ENCODE measurements at regions of chr6 and their contacts with region 1.

Region 1: GRCh38 chr6:11028964-11029363 is 15.1 kb downstream of the ELOVL2 start:
- DNase-seq: no peak
- H3K4me3 ChIP-seq: no peak overlapping the region
- H3K27ac ChIP-seq: no peak overlapping the region
- H3K4me1 ChIP-seq: peaks cover 11% of the 10 kb centered on the region
- CTCF ChIP-seq: no peak

Region 2: GRCh38 chr6:11043961-11044711 is 15.2 kb after region 1 on chr6 and contains the start of gene ELOVL2:
- CTCF ChIA-PET with region 1: no interaction called
- POLR2A ChIA-PET with region 1: interaction called, 4 read pairs
- intact Hi-C with region 1: loop called (anchors 2 kb)
- DNase-seq: no peak
- H3K4me3 ChIP-seq: no peak within 1 kb of the TSS
- H3K27ac ChIP-seq: no peak within 1 kb of the TSS
- H3K4me1 ChIP-seq: no peaks in the 10 kb centered on the region
- CTCF ChIP-seq: no peak
- total RNA-seq, gene ELOVL2: not detected in 2 replicates

Region 3: DNA sequence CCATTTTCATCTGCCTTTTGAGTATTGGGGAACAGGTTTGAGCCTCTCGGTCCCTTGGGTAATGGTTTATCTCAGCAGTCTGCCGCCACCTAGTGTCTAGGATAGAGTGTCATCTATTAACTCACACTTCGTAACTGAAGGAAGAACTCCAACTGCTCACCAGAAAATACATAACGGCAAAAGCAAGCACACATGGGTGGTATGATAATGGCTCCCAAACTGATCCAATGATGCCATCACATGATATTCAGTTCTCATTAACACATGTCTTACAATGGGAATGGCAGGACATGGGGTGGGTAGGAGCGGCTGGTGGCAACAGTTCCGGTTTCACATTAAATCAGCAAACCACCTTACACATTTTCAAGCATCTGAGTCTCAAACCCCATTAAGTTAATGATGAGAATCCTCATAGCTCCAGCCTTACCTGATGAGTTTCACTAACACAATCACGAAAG is 1577.0 kb after region 1 on chr6:
- CTCF ChIA-PET with region 1: no interaction called
- POLR2A ChIA-PET with region 1: no interaction called
- intact Hi-C with region 1: no loop called
- DNase-seq: peak; percentile 86
- H3K4me3 ChIP-seq: peak overlapping the region; percentile 55
- H3K27ac ChIP-seq: no peak overlapping the region
- H3K4me1 ChIP-seq: peaks cover 58% of the 10 kb centered on the region
- CTCF ChIP-seq: peak; percentile 98

Measured in OCI-LY7 (cell line).